CD14-positive monocyte (primary cell): ENCODE measurements at regions of chr14 and their contacts with region 1.

Region 1: GRCh38 chr14:50060871-50061663 is 55.3 kb downstream of the VCPKMT start:
- DNase-seq: peak; percentile 76 to 91 (median 87)
- H3K4me3 ChIP-seq: peak overlapping the region in 1 of 3 experiments; percentile 38
- H3K4me3 Mint-ChIP-seq: peak overlapping the region; percentile 27 to 59
- H3K27ac ChIP-seq: peak overlapping the region; percentile 92 to 94
- H3K27ac Mint-ChIP-seq: peak overlapping the region; percentile 95 to 100 (median 99)
- H3K4me1 ChIP-seq: peaks cover 86 to 89% of the 10 kb centered on the region in 2 donors
- H3K4me1 Mint-ChIP-seq: peaks cover 92% of the 10 kb centered on the region
- H3K27me3 ChIP-seq: no peaks in the 10 kb centered on the region
- H3K27me3 Mint-ChIP-seq: peaks cover 0 to 6% (median 2%) of the 10 kb centered on the region in 3 donors
- CTCF ChIP-seq: peak; percentile 21

Region 2: DNA sequence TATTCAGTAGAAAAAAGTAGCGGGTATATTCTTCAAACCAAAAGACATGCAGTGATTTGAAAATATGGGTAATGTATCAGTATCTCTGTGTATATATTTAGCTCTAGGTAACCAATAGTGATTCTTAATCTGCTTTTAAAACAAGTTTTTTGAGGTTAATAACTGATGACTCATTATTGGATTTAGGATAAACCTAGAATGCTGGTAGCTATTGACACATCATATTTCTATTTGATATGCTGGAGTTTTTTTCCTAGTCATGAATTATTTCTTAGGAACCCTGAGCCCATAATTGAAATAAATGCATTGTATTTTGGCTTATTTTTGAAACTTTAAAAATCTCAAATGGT is 152.7 kb before region 1 on chr14:
- intact Hi-C with region 1: loop called in 1 of 2 experiments (anchors 5 kb)
- DNase-seq: peak in 1 of 3 donors; percentile 39
- H3K4me3 ChIP-seq: peak overlapping the region in 1 of 3 experiments; percentile 26
- H3K4me3 Mint-ChIP-seq: peak overlapping the region; percentile 41 to 62
- H3K27ac ChIP-seq: peak overlapping the region; percentile 91 to 92
- H3K27ac Mint-ChIP-seq: peak overlapping the region; percentile 93 to 99 (median 96)
- H3K4me1 ChIP-seq: peaks cover 55 to 76% of the 10 kb centered on the region in 2 donors
- H3K4me1 Mint-ChIP-seq: peaks cover 48% of the 10 kb centered on the region
- H3K27me3 ChIP-seq: no peaks in the 10 kb centered on the region
- H3K27me3 Mint-ChIP-seq: no peaks in the 10 kb centered on the region
- CTCF ChIP-seq: no peak

Region 3: DNA sequence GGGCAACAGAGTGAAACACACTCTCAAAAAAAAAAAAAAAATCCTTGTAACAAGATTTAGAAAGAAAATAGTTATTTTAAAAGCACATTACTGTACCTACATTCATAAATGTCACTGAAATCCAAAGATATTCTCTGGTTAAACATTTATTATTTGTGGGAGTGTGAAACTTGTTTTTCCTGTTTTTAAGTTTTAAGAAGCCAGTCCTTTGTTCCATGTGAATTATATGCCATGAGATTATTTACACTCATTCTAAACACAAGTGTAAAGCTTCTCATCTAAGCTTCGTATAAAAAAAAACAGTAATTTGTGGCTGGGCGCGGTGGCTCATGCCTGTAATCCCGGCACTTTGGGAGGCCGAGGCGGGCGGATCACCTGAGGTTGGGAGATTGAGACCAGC is 40.4 kb after region 1 on chr14:
- intact Hi-C with region 1: loop called (anchors 5 kb)
- DNase-seq: no peak
- H3K4me3 ChIP-seq: no peak overlapping the region
- H3K4me3 Mint-ChIP-seq: no peak overlapping the region
- H3K27ac ChIP-seq: no peak overlapping the region
- H3K27ac Mint-ChIP-seq: no peak overlapping the region
- H3K4me1 ChIP-seq: peaks cover 5 to 9% of the 10 kb centered on the region in 2 donors
- H3K4me1 Mint-ChIP-seq: peaks cover 11% of the 10 kb centered on the region
- H3K27me3 ChIP-seq: no peaks in the 10 kb centered on the region
- H3K27me3 Mint-ChIP-seq: peaks cover 0 to 2% (median 0%) of the 10 kb centered on the region in 3 donors
- CTCF ChIP-seq: no peak

Region 4: GRCh38 chr14:50396631-50397390 is 335.7 kb after region 1 on chr14 and contains the start of gene CDKL1:
- intact Hi-C with region 1: no loop called
- DNase-seq: peak; percentile 16 to 32 (median 22)
- H3K4me3 ChIP-seq: peak within 1 kb of the TSS; percentile 51 to 77 (median 53)
- H3K4me3 Mint-ChIP-seq: peak within 1 kb of the TSS; percentile 90 to 96
- H3K27ac ChIP-seq: no peak within 1 kb of the TSS
- H3K27ac Mint-ChIP-seq: peak within 1 kb of the TSS in 5 of 7 donors; percentile 16 to 81 (median 43)
- H3K4me1 ChIP-seq: peaks cover 12 to 14% of the 10 kb centered on the region in 2 donors
- H3K4me1 Mint-ChIP-seq: peaks cover 23% of the 10 kb centered on the region
- H3K27me3 ChIP-seq: peaks cover 0 to 10% of the 10 kb centered on the region in 2 donors
- H3K27me3 Mint-ChIP-seq: peaks cover 7 to 11% (median 7%) of the 10 kb centered on the region in 3 donors
- CTCF ChIP-seq: no peak
- polyA plus RNA-seq, gene CDKL1: 1.2 to 2.5 (median 1.3) TPM